ENCODE measurements at regions of chr9 and their contacts with region 1.

Region 1: DNA sequence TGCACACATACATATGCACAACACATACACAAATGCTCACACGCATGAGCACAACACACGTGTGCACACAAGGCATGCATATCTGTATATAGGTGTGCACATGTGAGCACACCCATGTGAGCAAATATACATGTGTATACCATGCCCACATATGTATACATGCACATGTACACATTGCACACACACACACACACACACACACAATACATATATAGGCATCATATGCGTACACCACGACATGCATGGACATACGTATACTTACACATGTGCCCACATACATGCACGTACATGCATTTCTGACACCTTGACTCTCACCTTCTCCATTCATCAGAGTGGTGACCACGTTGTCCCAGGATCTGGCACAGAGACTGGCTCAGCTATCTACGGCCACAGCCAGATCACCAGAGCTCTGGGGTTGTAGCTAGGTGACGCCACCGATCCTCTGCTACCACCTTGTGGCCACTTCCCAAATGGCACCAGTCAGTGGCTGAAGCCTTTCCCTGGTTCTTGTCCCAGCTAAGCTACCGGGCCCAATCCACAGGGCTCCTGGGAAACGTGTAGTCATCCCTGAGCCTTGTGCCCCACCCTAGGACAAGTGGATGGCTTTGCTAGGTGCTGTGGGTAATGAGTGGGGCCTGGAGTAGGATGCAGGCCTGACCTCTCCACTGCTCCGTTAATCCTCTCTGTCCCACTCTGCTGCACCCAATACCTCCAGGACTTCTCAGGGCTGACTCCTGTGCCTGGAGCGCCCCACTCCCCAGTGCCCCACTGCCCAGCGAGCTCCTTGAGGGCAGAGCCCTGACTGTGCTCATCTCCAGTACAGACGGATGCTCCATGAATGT is 194.4 kb downstream of the RGS3 start:
- DNase-seq: peak; percentile 89
- H3K4me3 ChIP-seq: no peak overlapping the region
- H3K27ac ChIP-seq: no peak overlapping the region
- H3K4me1 ChIP-seq: peaks cover 45% of the 10 kb centered on the region
- H3K27me3 ChIP-seq: peaks cover 0 to 8% of the 10 kb centered on the region in 2 experiments
- CTCF ChIP-seq: peak; percentile 92 to 96
- POLR2A ChIP-seq: no peak

Region 2: DNA sequence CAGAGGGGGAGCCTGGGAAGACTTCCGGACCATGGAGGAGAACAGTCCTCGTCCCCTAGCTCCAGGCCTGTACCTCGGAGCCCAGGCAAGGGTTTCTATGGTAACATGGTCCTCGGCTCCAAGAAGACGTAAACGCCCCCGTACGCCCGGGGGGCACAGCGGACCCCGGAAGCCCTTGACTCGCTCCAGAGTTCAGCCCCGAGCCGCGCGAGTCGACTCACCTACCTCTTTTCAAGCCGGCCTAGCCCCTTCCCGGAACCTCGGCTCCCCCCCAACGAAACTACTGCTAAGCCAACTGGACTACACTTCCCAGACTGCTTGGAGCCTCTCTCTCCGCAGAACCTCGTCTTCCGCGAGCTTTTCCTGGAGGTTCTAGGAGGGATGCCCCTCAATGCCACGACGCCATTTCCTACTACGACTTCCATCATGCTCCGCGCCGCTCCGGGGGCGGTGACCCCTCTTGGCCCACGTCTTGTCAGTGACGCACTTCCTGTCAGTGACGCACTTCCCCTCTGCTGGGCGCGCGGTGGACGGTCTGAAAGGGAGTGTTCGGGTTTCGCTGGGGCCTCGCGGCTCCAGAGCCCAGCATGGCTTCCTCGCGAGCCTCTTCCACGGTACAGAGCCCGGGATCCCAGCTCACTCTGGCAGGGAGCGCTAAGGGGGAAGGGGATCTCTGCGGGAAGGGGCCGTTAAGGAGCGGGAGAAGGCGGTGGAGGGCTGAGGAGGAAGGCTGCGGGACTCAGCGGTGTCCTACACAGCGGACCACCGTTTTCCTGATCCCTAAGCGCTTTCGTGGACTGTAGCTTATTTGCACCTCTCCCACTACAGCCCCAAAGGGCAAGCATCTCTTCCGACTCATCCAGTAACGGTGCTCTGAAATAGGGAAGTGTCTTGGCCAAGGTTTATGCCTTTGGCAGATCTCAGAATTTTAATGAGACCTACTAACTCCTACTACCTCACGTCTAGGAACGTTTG is 382.5 kb before region 1 on chr9 and contains the starts of genes CDC26 and PRPF4:
- CTCF ChIA-PET with region 1: interaction called, 52 read pairs
- POLR2A ChIA-PET with region 1: no interaction called
- dilution Hi-C with region 1: no loop called
- intact Hi-C with region 1: loop called (anchors 1 kb)
- DNase-seq: peak; percentile 99
- H3K4me3 ChIP-seq: peak within 1 kb of the TSS; percentile 55 to 81 (median 74)
- H3K27ac ChIP-seq: peak within 1 kb of the TSS; percentile 94
- H3K4me1 ChIP-seq: peaks cover 13% of the 10 kb centered on the region
- H3K27me3 ChIP-seq: no peaks in the 10 kb centered on the region
- CTCF ChIP-seq: no peak
- POLR2A ChIP-seq: peak; percentile 94
- total RNA-seq, gene CDC26: 36.9 and 37.5 TPM in 2 replicates
- total RNA-seq, gene PRPF4: 24.2 and 25.8 TPM in 2 replicates

Region 3: GRCh38 chr9:113410207-113410864 is 247.6 kb before region 1 on chr9 and contains the starts of genes C9orf43 and POLE3:
- CTCF ChIA-PET with region 1: interaction called, 11 read pairs
- POLR2A ChIA-PET with region 1: interaction called, 5 read pairs
- dilution Hi-C with region 1: no loop called
- intact Hi-C with region 1: loop called (anchors 1 kb)
- DNase-seq: peak; percentile 97
- H3K4me3 ChIP-seq: peak within 1 kb of the TSS; percentile 86 to 98 (median 92)
- H3K27ac ChIP-seq: peak within 1 kb of the TSS; percentile 84
- H3K4me1 ChIP-seq: peaks cover 9% of the 10 kb centered on the region
- H3K27me3 ChIP-seq: no peaks in the 10 kb centered on the region
- CTCF ChIP-seq: no peak
- POLR2A ChIP-seq: peak; percentile 72
- total RNA-seq, gene C9orf43: 0.66 and 0.88 TPM in 2 replicates
- total RNA-seq, gene POLE3: 53.8 and 54.3 TPM in 2 replicates

Region 4: GRCh38 chr9:113501129-113501686 is 156.7 kb before region 1 on chr9:
- CTCF ChIA-PET with region 1: interaction called, 16 read pairs
- POLR2A ChIA-PET with region 1: interaction called, 6 read pairs
- dilution Hi-C with region 1: no loop called
- intact Hi-C with region 1: loop called (anchors 1 kb)
- DNase-seq: peak; percentile 98
- H3K4me3 ChIP-seq: peak overlapping the region; percentile 94 to 99 (median 94)
- H3K27ac ChIP-seq: peak overlapping the region; percentile 100
- H3K4me1 ChIP-seq: peaks cover 34% of the 10 kb centered on the region
- H3K27me3 ChIP-seq: no peaks in the 10 kb centered on the region
- CTCF ChIP-seq: peak in 1 of 2 donors; percentile 22
- POLR2A ChIP-seq: peak; percentile 88

Region 5: DNA sequence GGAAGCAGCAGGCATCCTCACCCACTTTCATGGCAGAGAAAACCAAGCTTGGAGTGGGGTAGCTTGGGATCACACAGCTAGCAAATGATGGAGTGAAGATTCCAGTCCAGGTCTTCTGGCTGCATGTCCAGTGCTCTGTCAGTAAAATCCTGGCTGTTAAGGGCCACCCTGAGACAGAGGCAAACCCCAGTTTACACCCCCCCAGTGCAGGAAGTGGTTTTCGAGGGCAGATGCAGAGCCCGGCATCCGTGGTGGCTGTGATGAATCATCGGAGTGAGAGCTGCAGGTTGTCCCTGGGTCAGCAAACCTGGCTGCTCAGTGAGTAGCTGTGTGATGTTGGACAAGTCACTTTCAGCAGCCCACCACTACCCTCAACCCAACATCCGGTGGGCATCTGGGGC is 79.0 kb before region 1 on chr9:
- CTCF ChIA-PET with region 1: interaction called, 32 read pairs
- POLR2A ChIA-PET with region 1: no interaction called
- dilution Hi-C with region 1: no loop called
- intact Hi-C with region 1: no loop called
- DNase-seq: peak; percentile 49
- H3K4me3 ChIP-seq: no peak overlapping the region
- H3K27ac ChIP-seq: peak overlapping the region; percentile 39
- H3K4me1 ChIP-seq: peaks cover 48% of the 10 kb centered on the region
- H3K27me3 ChIP-seq: no peaks in the 10 kb centered on the region
- CTCF ChIP-seq: no peak
- POLR2A ChIP-seq: no peak

Region 6: GRCh38 chr9:113614843-113615648 is 42.9 kb before region 1 on chr9:
- CTCF ChIA-PET with region 1: interaction called, 56 read pairs
- POLR2A ChIA-PET with region 1: interaction called, 19 read pairs
- dilution Hi-C with region 1: no loop called
- intact Hi-C with region 1: loop called (anchors 1 kb)
- DNase-seq: no peak
- H3K4me3 ChIP-seq: no peak overlapping the region
- H3K27ac ChIP-seq: no peak overlapping the region
- H3K4me1 ChIP-seq: peaks cover 42% of the 10 kb centered on the region
- H3K27me3 ChIP-seq: no peaks in the 10 kb centered on the region
- CTCF ChIP-seq: no peak
- POLR2A ChIP-seq: no peak

Region 7: GRCh38 chr9:113640418-113640817 is 17.5 kb before region 1 on chr9:
- CTCF ChIA-PET with region 1: interaction called, 24 read pairs
- POLR2A ChIA-PET with region 1: interaction called, 3 read pairs
- dilution Hi-C with region 1: no loop called
- intact Hi-C with region 1: no loop called
- DNase-seq: no peak
- H3K4me3 ChIP-seq: no peak overlapping the region
- H3K27ac ChIP-seq: no peak overlapping the region
- H3K4me1 ChIP-seq: peaks cover 4% of the 10 kb centered on the region
- H3K27me3 ChIP-seq: no peaks in the 10 kb centered on the region
- CTCF ChIP-seq: no peak
- POLR2A ChIP-seq: no peak

Region 8: DNA sequence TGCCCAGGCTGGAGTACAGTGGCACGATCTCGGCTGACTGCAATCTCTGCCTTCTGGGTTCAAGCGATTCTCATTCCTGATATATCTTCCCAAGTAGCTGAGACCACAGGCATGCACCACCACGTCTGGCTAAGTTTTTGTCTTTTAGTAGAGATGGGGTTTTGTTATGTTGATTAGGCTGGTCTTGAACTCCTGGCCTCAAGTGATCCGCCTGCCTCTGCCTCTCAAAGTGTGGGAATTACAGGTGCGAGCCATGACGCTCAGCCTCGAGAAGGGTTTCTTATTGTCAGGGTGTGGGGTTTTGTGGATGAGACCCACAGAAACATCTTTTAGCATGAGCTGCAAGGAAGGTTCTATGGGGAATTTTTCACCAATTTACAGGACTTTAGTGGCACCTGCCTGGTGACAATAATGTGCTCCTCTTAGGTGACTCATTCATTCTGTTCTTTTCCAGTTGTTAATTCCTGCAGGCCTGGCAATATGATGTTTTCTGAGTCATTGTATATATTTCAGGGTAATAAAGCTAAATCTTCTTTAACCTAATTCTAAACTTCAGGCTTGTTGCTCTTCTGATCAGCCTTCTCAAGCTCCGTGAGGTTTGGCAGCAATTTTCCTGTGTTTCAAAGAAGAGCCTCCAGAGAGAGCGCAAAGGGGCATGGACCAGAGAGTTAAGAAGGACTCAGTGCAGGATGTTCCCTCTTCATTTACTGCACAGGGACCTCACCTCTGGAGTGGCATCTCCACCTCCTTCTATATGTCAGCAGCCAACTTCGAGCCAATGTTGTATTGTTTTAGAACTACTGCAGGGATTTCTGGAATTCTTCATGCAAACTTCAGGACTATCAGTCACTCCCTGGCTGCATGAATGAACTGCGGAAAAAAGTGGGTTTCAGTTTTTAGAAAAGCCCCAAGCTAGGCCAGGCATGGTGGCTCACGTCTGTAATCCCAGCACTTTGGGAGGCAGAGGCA is 140.4 kb after region 1 on chr9:
- CTCF ChIA-PET with region 1: no interaction called
- POLR2A ChIA-PET with region 1: no interaction called
- dilution Hi-C with region 1: no loop called
- intact Hi-C with region 1: no loop called
- DNase-seq: no peak
- H3K4me3 ChIP-seq: no peak overlapping the region
- H3K27ac ChIP-seq: no peak overlapping the region
- H3K4me1 ChIP-seq: no peaks in the 10 kb centered on the region
- H3K27me3 ChIP-seq: peaks cover 4 to 11% of the 10 kb centered on the region in 2 experiments
- CTCF ChIP-seq: no peak
- POLR2A ChIP-seq: no peak